Right cardiac atrium (tissue), 5 donors: ENCODE measurements at regions of chr3 and their contacts with region 1.

Region 1: GRCh38 chr3:49554633-49555265 is 472 bp downstream of the BSN start:
- DNase-seq: peak in 1 of 3 donors; percentile 42
- ATAC-seq: peak; percentile 62 to 72
- H3K4me3 ChIP-seq: peak overlapping the region; percentile 58
- H3K27ac ChIP-seq: no peak overlapping the region
- H3K4me1 ChIP-seq: peaks cover 6% of the 10 kb centered on the region
- H3K27me3 ChIP-seq: no peaks in the 10 kb centered on the region

Region 2: GRCh38 chr3:49661281-49661680 is 106.5 kb after region 1 on chr3:
- intact Hi-C with region 1: loop called in 1 of 4 experiments (anchors 5 kb)
- DNase-seq: no peak
- ATAC-seq: no peak
- H3K4me3 ChIP-seq: no peak overlapping the region
- H3K27ac ChIP-seq: no peak overlapping the region
- H3K4me1 ChIP-seq: no peaks in the 10 kb centered on the region
- H3K27me3 ChIP-seq: no peaks in the 10 kb centered on the region